ENCODE measurements at regions of chr1 and their contacts with region 1.

Region 1: GRCh38 chr1:12407050-12407961 is 177.5 kb downstream of the VPS13D start:
- DNase-seq: peak; percentile 39 to 81 (median 60)
- ATAC-seq: peak; percentile 87
- H3K4me3 ChIP-seq: no peak overlapping the region
- H3K27ac ChIP-seq: peak overlapping the region; percentile 60
- H3K4me1 ChIP-seq: peaks cover 11 to 33% of the 10 kb centered on the region in 2 experiments; a peak in 4 of 5 replicates
- H3K27me3 ChIP-seq: no peaks in the 10 kb centered on the region
- CTCF ChIP-seq: peak; percentile 47 to 76 (median 60); a peak in 5 of 6 replicates
- EP300 ChIP-seq: no peak; the same call in 1 of the 2 replicates
- POLR2A ChIP-seq: no peak
- RAD21 ChIP-seq: peak; percentile 83 to 89

Region 2: GRCh38 chr1:12539705-12540579 is 132.6 kb after region 1 on chr1:
- CTCF ChIA-PET with region 1: no interaction called
- POLR2A ChIA-PET with region 1: no interaction called
- in situ Hi-C with region 1: no loop called
- intact Hi-C with region 1: loop called (anchors 2 kb)
- DNase-seq: peak in 3 of 4 experiments; percentile 29 to 53 (median 35)
- ATAC-seq: no peak
- H3K4me3 ChIP-seq: no peak overlapping the region
- H3K27ac ChIP-seq: no peak overlapping the region
- H3K4me1 ChIP-seq: peaks cover 34% of the 10 kb centered on the region in 2 experiments
- H3K27me3 ChIP-seq: no peaks in the 10 kb centered on the region
- CTCF ChIP-seq: no peak
- EP300 ChIP-seq: no peak
- POLR2A ChIP-seq: no peak
- RAD21 ChIP-seq: no peak

Region 3: GRCh38 chr1:12565094-12565965 is 158.0 kb after region 1 on chr1:
- CTCF ChIA-PET with region 1: no interaction called
- POLR2A ChIA-PET with region 1: no interaction called
- in situ Hi-C with region 1: no loop called
- intact Hi-C with region 1: no loop called
- DNase-seq: no peak
- ATAC-seq: no peak
- H3K4me3 ChIP-seq: no peak overlapping the region
- H3K27ac ChIP-seq: no peak overlapping the region
- H3K4me1 ChIP-seq: peaks cover 0 to 3% of the 10 kb centered on the region in 2 experiments; a peak in 3 of 5 replicates
- H3K27me3 ChIP-seq: no peaks in the 10 kb centered on the region
- CTCF ChIP-seq: no peak
- EP300 ChIP-seq: no peak
- POLR2A ChIP-seq: no peak
- RAD21 ChIP-seq: no peak